OCI-LY7 (cell line): ENCODE measurements at regions of chr12 and their contacts with region 1.

Region 1: DNA sequence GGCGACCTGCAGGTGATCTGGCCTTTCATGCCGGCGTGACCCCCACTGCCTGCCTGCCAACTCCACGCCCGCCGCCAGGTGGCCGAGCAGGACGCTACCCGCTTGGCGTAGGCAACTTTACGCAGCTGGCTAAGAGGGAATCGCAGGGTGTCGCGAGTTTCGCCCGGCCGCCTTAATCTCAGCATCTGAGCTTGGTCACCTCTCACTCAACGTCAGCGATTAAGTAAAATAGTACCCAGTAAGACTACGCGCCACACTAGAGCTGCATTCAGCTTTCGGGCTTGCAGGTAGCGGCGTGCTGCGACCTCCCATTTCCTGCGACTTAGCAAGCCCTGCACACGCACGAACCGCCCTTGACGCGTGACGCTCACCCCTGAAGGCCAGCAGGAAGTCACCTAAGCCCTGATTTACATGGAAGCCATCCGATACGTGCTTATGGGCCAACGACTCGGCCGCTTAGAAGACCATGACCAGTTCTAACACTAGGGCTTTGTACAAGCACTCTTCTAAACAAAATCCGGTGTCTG is 33.2 kb downstream of the WBP11 start:
- DNase-seq: peak; percentile 95
- H3K4me3 ChIP-seq: peak overlapping the region; percentile 81
- H3K27ac ChIP-seq: peak overlapping the region; percentile 95
- H3K4me1 ChIP-seq: peaks cover 47% of the 10 kb centered on the region
- CTCF ChIP-seq: peak; percentile 80

Region 2: DNA sequence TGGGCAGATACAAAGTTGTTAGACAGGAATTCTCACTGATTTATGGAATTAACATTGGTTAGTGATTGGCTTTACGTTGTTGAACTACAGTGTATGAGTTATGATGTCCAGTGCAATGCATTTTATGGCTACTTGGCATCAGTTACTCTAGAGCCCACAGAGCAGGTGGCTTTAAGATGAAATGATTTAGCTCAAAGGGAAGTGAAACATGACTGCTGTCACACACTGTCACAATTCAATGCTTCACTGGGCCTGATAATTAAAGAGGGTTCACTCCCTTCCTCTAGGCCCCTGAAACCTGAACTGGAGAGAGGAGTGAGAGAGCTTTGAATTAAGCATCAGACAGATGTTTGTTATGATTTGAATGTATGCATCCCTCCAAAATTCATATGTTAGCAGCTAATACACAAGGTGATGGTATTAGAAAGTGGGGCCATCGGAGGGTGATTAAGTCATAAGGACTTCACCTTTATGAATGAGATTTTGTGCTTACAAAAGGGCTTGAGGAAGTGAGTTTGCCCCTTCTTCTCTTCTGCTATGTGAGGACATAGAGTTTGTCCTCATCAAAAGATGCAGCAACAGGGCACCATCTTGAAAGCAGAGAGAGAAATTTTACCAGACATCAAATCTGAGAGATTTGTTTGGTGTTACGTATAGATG is 612.8 kb before region 1 on chr12:
- CTCF ChIA-PET with region 1: no interaction called
- POLR2A ChIA-PET with region 1: interaction called, 4 read pairs
- intact Hi-C with region 1: loop called (anchors 5 kb)
- DNase-seq: peak; percentile 99
- H3K4me3 ChIP-seq: peak overlapping the region; percentile 49
- H3K27ac ChIP-seq: peak overlapping the region; percentile 97
- H3K4me1 ChIP-seq: peaks cover 85% of the 10 kb centered on the region
- CTCF ChIP-seq: no peak

Region 3: GRCh38 chr12:14384783-14385638 is 385.0 kb before region 1 on chr12:
- CTCF ChIA-PET with region 1: no interaction called
- POLR2A ChIA-PET with region 1: interaction called, 3 read pairs
- intact Hi-C with region 1: loop called (anchors 5 kb)
- DNase-seq: peak; percentile 98
- H3K4me3 ChIP-seq: peak overlapping the region; percentile 85
- H3K27ac ChIP-seq: peak overlapping the region; percentile 86
- H3K4me1 ChIP-seq: peaks cover 39% of the 10 kb centered on the region
- CTCF ChIP-seq: no peak

Region 4: DNA sequence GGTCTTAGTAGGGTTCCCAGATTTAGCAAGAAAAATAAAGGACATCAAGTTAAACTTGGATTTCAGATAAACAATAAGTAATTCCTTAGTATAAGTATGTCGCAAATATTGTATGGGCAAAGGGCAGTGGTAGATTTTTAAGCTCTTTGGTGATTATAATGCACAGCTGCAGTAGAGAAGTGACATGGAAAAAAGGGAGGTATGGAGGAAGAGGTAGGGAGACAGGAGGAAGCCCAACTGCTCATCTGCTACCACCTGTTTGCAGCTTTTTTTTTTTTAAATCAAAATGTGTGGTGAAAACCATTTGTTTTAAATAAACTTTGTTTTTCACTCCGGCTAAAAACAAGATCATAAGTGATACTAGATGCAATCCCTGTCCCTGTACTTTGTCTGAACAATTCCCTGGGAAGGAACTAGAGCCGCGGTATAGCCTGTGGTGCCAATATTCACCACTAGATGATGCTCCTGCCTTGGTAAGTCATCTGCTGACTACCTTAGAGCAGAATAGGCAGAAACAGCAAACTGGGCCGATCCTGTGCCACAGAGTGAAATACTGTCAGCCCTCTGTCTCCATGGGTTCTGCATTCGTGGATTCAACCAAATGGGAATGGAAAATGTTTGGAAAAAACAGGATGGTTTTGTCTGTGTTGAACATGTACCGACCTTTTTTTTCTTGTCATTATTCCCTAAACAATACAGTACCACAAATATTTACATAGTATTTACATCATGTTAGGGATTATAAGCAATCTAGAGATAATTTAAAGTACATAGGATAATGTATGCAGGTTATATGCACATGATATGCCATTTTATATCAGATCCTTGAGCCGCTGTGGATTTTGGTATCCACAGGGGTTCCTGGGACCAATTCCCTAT is 140.0 kb before region 1 on chr12:
- CTCF ChIA-PET with region 1: no interaction called
- POLR2A ChIA-PET with region 1: interaction called, 3 read pairs
- intact Hi-C with region 1: loop called (anchors 5 kb)
- DNase-seq: peak; percentile 82
- H3K4me3 ChIP-seq: no peak overlapping the region
- H3K27ac ChIP-seq: no peak overlapping the region
- H3K4me1 ChIP-seq: peaks cover 28% of the 10 kb centered on the region
- CTCF ChIP-seq: peak; percentile 99

Region 5: DNA sequence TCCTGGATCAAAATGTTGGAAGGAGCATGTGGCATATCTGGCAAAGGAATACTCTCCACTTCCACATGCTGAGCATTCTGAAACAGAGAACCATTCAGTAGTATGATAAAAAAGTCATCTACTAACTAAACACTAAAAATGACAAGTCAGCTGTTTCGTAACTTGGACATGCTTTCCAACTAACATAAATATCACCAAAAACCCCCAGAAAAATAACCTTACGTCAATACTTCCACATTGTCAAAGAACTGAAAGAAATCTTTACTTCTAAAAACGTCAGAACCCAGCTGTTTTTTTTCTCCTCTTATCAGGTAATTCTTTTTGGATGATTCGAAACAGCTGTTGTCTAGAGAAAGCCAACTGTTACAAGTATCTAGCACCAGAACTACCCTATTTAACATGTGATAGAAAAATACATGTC is 25.0 kb after region 1 on chr12:
- CTCF ChIA-PET with region 1: interaction called, 3 read pairs
- POLR2A ChIA-PET with region 1: interaction called, 162 read pairs
- intact Hi-C with region 1: no loop called
- DNase-seq: no peak
- H3K4me3 ChIP-seq: no peak overlapping the region
- H3K27ac ChIP-seq: no peak overlapping the region
- H3K4me1 ChIP-seq: no peaks in the 10 kb centered on the region
- CTCF ChIP-seq: no peak

Region 6: GRCh38 chr12:14960548-14961465 is 190.8 kb after region 1 on chr12:
- CTCF ChIA-PET with region 1: no interaction called
- POLR2A ChIA-PET with region 1: interaction called, 36 read pairs
- intact Hi-C with region 1: loop called (anchors 2 kb)
- DNase-seq: peak; percentile 42
- H3K4me3 ChIP-seq: peak overlapping the region; percentile 72
- H3K27ac ChIP-seq: peak overlapping the region; percentile 97
- H3K4me1 ChIP-seq: peaks cover 53% of the 10 kb centered on the region
- CTCF ChIP-seq: no peak

Region 7: GRCh38 chr12:15882118-15882971 is 1112.3 kb after region 1 on chr12 and contains the start of gene STRAP:
- CTCF ChIA-PET with region 1: no interaction called
- POLR2A ChIA-PET with region 1: no interaction called
- intact Hi-C with region 1: loop called (anchors 10 kb)
- DNase-seq: peak; percentile 94
- H3K4me3 ChIP-seq: peak within 1 kb of the TSS; percentile 94
- H3K27ac ChIP-seq: peak within 1 kb of the TSS; percentile 66
- H3K4me1 ChIP-seq: peaks cover 18% of the 10 kb centered on the region
- CTCF ChIP-seq: no peak
- total RNA-seq, gene STRAP: 43.1 and 45.5 TPM in 2 replicates